H1 (cell line): ENCODE measurements at regions of chr1 and their contacts with region 1.

Region 1: DNA sequence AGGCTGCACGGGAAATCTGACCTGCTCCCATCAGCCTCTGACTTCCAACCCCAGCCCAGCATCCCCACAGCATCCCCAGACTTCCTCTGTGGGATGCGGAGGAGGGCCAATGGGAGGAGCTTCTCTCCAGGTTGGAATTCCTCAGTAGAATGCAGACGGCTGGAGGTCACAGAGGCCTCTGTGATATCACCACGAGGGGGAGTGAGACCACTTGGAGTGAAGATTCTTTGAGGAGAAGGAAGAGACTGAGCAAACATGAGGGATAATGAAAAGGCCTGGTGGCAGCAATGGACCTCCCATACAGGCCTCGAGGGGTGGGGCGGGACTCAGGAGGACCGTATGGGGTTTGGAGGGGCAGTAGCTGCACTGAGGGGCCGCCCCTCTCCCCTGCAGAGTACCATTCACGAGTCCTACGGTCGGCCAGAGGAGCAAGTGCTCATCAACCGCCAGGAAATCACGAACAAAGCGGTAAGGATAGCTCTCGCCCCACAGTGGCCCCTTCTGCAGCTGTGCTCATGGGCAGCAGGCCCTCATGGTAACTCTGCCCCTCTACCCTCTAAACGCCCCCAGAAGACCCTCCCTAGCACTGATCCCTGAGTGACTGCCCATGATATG is at the start of gene CATSPER4:
- DNase-seq: peak; percentile 49 to 77
- H3K4me3 ChIP-seq: peak within 1 kb of the TSS in 1 of 4 experiments; percentile 23; a peak in 1 of 8 replicates
- H3K27ac ChIP-seq: no peak within 1 kb of the TSS
- H3K4me1 ChIP-seq: peaks cover 0 to 7% (median 2%) of the 10 kb centered on the region in 4 experiments; a peak in 3 of 7 replicates
- H3K27me3 ChIP-seq: no peaks in the 10 kb centered on the region
- CTCF ChIP-seq: peak; percentile 46 to 73 (median 64)
- EP300 ChIP-seq: no peak
- POLR2A ChIP-seq: 0 out of 3 replicates have a peak, but pooled peaks of 1 of the 2 experiments have one; percentile 16
- RAD21 ChIP-seq: peak; percentile 68 to 74
- total RNA-seq, gene CATSPER4: 0.65 and 0.90 TPM in 2 replicates

Region 2: GRCh38 chr1:26094677-26095383 is 95.7 kb before region 1 on chr1:
- CTCF ChIA-PET with region 1: no interaction called
- POLR2A ChIA-PET with region 1: no interaction called
- DNase-seq: peak; percentile 38 to 76
- H3K4me3 ChIP-seq: peak overlapping the region in 1 of 4 experiments; percentile 17; a peak in 1 of 8 replicates
- H3K27ac ChIP-seq: no peak overlapping the region
- H3K4me1 ChIP-seq: peaks cover 9 to 15% (median 12%) of the 10 kb centered on the region in 4 experiments
- H3K27me3 ChIP-seq: peaks cover 0 to 5% (median 2%) of the 10 kb centered on the region in 4 experiments; a peak in 2 of 7 replicates
- CTCF ChIP-seq: no peak
- EP300 ChIP-seq: no peak
- POLR2A ChIP-seq: no peak
- RAD21 ChIP-seq: no peak

Region 3: DNA sequence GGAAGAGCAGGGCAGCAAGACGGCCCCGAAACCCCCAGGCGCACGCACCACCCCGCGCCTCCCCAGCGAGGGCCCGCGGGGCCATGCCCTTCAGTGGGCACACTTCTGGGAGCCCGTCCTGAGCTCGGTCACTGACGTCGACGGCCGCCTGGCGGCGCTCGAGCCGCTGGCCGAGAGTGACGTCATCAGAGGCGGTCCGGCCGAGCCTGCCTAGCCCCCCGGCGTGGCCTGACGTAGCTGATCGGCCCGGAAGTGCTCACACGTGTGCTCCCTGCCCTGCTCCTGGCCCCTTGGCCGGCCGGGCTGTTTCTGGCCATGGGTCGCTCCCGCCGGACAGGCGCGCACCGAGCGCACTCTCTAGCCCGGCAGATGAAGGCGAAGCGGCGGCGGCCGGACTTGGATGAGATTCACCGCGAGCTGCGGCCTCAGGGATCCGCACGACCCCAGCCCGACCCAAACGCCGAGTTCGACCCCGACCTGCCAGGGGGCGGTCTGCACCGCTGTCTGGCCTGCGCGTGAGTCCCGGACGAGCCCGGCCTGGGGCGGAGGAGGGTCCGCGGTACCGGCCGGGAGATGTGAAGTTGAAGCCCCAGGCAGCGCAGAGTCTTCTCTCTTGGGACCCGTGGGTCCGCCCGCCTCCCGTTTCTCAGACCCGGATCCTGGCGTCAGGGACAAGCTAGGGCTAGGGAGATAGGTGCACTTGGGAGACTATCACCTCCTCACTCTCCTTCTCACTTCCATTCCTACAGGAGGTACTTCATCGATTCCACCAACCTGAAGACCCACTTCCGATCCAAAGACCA is 20.6 kb before region 1 on chr1 and contains the start of gene ZNF593:
- CTCF ChIA-PET with region 1: interaction called, 159 read pairs
- POLR2A ChIA-PET with region 1: interaction called, 4 read pairs
- DNase-seq: peak; percentile 78 to 96
- H3K4me3 ChIP-seq: peak within 1 kb of the TSS; percentile 71 to 79 (median 74)
- H3K27ac ChIP-seq: peak within 1 kb of the TSS; percentile 23; the same call in 1 of the 2 replicates
- H3K4me1 ChIP-seq: peaks cover 5 to 18% (median 13%) of the 10 kb centered on the region in 4 experiments
- H3K27me3 ChIP-seq: peaks cover 0 to 11% (median 6%) of the 10 kb centered on the region in 4 experiments; a peak in 6 of 7 replicates
- CTCF ChIP-seq: peak in 2 of 3 experiments; percentile 84 to 96; a peak in 3 of 4 replicates
- EP300 ChIP-seq: no peak; a peak in 1 of 3 replicates
- POLR2A ChIP-seq: peak in 1 of 2 experiments; percentile 86; a peak in 2 of 3 replicates
- RAD21 ChIP-seq: peak; percentile 17 to 41; a peak in 2 of 4 replicates
- total RNA-seq, gene ZNF593: 38.2 and 40.2 TPM in 2 replicates

Region 4: GRCh38 chr1:26177182-26177684 is 13.2 kb before region 1 on chr1 and contains the start of gene CNKSR1:
- CTCF ChIA-PET with region 1: interaction called, 159 read pairs
- POLR2A ChIA-PET with region 1: interaction called, 22 read pairs
- DNase-seq: peak; percentile 89 to 90
- H3K4me3 ChIP-seq: peak within 1 kb of the TSS; percentile 25 to 54 (median 32); a peak in 5 of 8 replicates
- H3K27ac ChIP-seq: peak within 1 kb of the TSS; percentile 75
- H3K4me1 ChIP-seq: peaks cover 0 to 2% (median 0%) of the 10 kb centered on the region in 4 experiments; a peak in 4 of 7 replicates
- H3K27me3 ChIP-seq: no peaks in the 10 kb centered on the region
- CTCF ChIP-seq: peak; percentile 40 to 62 (median 49)
- EP300 ChIP-seq: no peak
- POLR2A ChIP-seq: peak in 1 of 2 experiments; percentile 42; a peak in 1 of 3 replicates
- RAD21 ChIP-seq: no peak; a peak in 1 of 4 replicates
- total RNA-seq, gene CNKSR1: 13.0 and 14.5 TPM in 2 replicates

Region 5: GRCh38 chr1:26203642-26204318 is 13.3 kb after region 1 on chr1:
- CTCF ChIA-PET with region 1: interaction called, 32 read pairs
- POLR2A ChIA-PET with region 1: interaction called, 9 read pairs
- DNase-seq: no peak
- H3K4me3 ChIP-seq: no peak overlapping the region
- H3K27ac ChIP-seq: no peak overlapping the region
- H3K4me1 ChIP-seq: peaks cover 0 to 12% (median 5%) of the 10 kb centered on the region in 4 experiments; a peak in 5 of 7 replicates
- H3K27me3 ChIP-seq: no peaks in the 10 kb centered on the region
- CTCF ChIP-seq: peak; percentile 46 to 55 (median 53)
- EP300 ChIP-seq: no peak
- POLR2A ChIP-seq: no peak
- RAD21 ChIP-seq: peak; percentile 53 to 64